ENCODE measurements at regions of chr21 and their contacts with region 1.

Region 1: DNA sequence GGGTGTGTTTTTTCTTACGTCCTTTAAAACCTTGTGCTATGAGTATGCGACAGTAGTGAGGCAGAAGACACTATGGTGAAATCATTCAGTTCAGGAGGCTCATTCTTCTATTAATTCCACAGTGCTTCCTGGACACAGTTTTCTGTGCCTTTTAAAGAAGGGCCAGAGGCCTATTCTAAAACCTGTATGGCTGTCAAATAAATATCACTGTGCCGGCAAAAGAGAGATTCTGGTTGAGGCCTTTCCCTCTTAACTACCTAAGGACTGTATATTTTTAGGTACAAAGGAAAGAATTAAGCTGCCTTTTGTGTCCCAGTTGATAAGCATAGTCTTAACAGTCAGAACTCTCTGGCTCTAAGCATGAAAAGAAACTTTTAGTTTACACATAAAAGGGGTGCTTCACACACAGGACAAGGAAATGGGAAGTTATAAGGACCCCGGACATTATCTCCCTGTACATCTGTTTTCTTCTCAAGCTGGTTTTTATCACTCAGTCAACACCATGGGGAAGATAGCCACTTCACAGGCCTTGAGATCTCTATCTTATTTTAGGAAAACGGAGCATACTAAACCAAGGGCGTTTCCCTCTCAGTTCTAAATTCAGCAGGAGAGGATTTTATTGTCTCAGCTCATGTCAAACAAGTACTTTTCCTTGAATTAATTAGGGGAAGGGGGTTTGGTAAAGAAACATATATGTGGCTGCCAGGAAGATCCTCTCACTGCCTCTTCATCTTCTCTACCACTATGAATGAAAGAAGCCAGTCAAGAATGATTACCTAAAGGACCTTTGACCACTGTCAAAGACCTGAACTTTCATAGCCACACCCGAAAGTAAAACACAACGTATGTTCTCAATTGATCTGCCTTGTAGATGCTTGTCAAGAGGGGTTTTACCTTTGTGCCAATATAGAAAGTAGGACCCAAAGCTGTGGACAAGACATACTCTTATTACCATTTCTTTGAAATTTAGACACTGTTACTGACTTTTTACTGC is 71.4 kb upstream of the HSPA13 start:
- DNase-seq: no peak
- H3K4me3 Mint-ChIP-seq: no peak overlapping the region
- H3K27ac Mint-ChIP-seq: peak overlapping the region; percentile 79
- H3K4me1 Mint-ChIP-seq: peaks cover 35% of the 10 kb centered on the region
- H3K27me3 Mint-ChIP-seq: no peaks in the 10 kb centered on the region

Region 2: GRCh38 chr21:14438211-14438610 is 16.1 kb before region 1 on chr21:
- CTCF ChIA-PET with region 1: no interaction called
- DNase-seq: no peak
- H3K4me3 Mint-ChIP-seq: no peak overlapping the region
- H3K27ac Mint-ChIP-seq: no peak overlapping the region
- H3K4me1 Mint-ChIP-seq: no peaks in the 10 kb centered on the region
- H3K27me3 Mint-ChIP-seq: no peaks in the 10 kb centered on the region

Region 3: DNA sequence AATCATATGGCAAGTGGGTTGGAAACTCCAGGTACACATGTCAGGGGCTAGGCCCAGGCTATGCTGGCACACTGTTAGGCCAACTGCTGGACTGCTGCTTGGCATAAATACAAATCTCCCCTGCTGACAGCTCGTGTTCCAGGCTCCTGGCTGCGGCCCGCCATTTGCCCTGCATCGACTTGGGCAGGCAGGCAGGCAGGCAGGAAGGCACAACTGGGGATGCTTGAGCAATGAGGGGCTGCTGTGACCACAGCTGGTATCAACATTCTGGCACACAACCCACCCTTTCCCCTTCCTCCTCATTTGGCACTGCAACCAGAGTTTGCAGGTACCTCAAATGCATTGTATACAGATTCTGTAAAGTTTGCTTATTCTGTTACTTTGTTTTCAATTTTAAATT is 38.6 kb after region 1 on chr21:
- CTCF ChIA-PET with region 1: no interaction called
- DNase-seq: no peak
- H3K4me3 Mint-ChIP-seq: no peak overlapping the region
- H3K27ac Mint-ChIP-seq: no peak overlapping the region
- H3K4me1 Mint-ChIP-seq: peaks cover 29% of the 10 kb centered on the region
- H3K27me3 Mint-ChIP-seq: no peaks in the 10 kb centered on the region

Region 4: GRCh38 chr21:14737922-14738321 is 283.6 kb after region 1 on chr21:
- CTCF ChIA-PET with region 1: interaction called, 16 read pairs
- DNase-seq: peak; percentile 62
- H3K4me3 Mint-ChIP-seq: no peak overlapping the region
- H3K27ac Mint-ChIP-seq: no peak overlapping the region
- H3K4me1 Mint-ChIP-seq: peaks cover 42% of the 10 kb centered on the region
- H3K27me3 Mint-ChIP-seq: no peaks in the 10 kb centered on the region